ENCODE measurements at regions of chr3 and their contacts with region 1.

Region 1: GRCh38 chr3:197959898-197960693 is at the start of gene LMLN:
- DNase-seq: peak; percentile 80
- ATAC-seq: peak; percentile 96
- H3K4me3 ChIP-seq: peak within 1 kb of the TSS; percentile 73
- H3K27ac ChIP-seq: peak within 1 kb of the TSS; percentile 41; the same call in 1 of the 2 replicates
- H3K4me1 ChIP-seq: peaks cover 6% of the 10 kb centered on the region
- H3K27me3 ChIP-seq: no peaks in the 10 kb centered on the region
- CTCF ChIP-seq: no peak
- EP300 ChIP-seq: 0 out of 4 replicates have a peak, but pooled peaks of 1 of the 2 experiments have one; percentile 44
- POLR2A ChIP-seq: peak; percentile 78
- RAD21 ChIP-seq: no peak
- polyA plus RNA-seq, gene LMLN: 0.02 to 0.18 TPM

Region 2: GRCh38 chr3:197949754-197950660 is 10.1 kb before region 1 on chr3 and contains the start of gene RPL35A:
- CTCF ChIA-PET with region 1: interaction called, 4 read pairs
- POLR2A ChIA-PET with region 1: interaction called, 7 read pairs
- RAD21 ChIA-PET with region 1: interaction called, 3 read pairs
- SMC1A ChIA-PET with region 1: interaction called, 9 read pairs
- in situ Hi-C with region 1: no loop called
- intact Hi-C with region 1: loop called (anchors 1 kb)
- DNase-seq: peak; percentile 98
- ATAC-seq: peak; percentile 89
- H3K4me3 ChIP-seq: peak within 1 kb of the TSS; percentile 95
- H3K27ac ChIP-seq: peak within 1 kb of the TSS; percentile 95
- H3K4me1 ChIP-seq: peaks cover 3% of the 10 kb centered on the region; the same call in 1 of the 2 replicates
- H3K27me3 ChIP-seq: no peaks in the 10 kb centered on the region
- CTCF ChIP-seq: no peak
- EP300 ChIP-seq: peak in 1 of 2 experiments; percentile 62; a peak in 2 of 4 replicates
- POLR2A ChIP-seq: peak; percentile 98
- RAD21 ChIP-seq: no peak
- polyA plus RNA-seq, gene RPL35A: 2,763 to 3,144 TPM

Region 3: GRCh38 chr3:198017100-198017499 is 57.0 kb after region 1 on chr3:
- CTCF ChIA-PET with region 1: no interaction called
- POLR2A ChIA-PET with region 1: no interaction called
- RAD21 ChIA-PET with region 1: no interaction called
- SMC1A ChIA-PET with region 1: no interaction called
- in situ Hi-C with region 1: no loop called
- intact Hi-C with region 1: no loop called
- DNase-seq: no peak
- ATAC-seq: no peak
- H3K4me3 ChIP-seq: no peak overlapping the region
- H3K27ac ChIP-seq: no peak overlapping the region
- H3K4me1 ChIP-seq: no peaks in the 10 kb centered on the region
- H3K27me3 ChIP-seq: no peaks in the 10 kb centered on the region; a peak in 1 of 4 replicates
- CTCF ChIP-seq: no peak
- EP300 ChIP-seq: no peak
- POLR2A ChIP-seq: no peak
- RAD21 ChIP-seq: no peak